ENCODE measurements at regions of chr2 and their contacts with region 1.

Region 1: DNA sequence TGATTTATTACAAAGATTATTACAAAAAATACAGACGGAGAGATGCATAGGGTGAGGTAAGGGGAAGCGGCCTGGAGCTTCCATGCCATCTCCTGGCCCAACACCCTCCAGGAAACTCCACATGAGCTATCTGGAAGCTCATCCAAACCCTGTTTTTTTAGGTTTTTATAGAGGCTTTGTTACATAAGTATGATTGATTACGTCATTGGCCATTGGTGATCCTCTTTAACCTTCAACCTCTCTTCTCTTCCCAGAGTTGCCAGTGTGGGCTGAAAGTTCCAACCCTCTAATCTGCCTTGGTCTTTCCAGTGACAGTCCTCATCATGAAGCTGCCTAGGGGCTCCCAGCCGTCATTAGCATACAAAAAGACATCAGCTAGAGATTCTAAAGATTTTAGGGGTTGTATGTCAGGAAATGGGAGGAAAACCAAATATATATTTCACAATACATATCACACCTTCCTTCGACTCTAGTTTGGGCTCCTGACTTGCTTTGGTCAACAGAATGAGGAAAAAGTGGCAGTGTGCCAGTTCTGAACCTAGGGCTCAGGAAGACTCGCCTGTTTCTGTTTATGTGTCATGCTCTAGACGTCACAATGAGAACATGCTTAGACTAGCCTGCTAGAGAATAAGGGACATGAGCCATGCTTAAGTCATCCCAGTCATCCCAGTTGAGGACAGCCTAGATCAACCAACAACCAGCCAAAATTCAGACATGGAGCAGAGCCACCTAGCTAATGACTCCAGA is 54.1 kb downstream of the ETAA1 start:
- DNase-seq: no peak
- ATAC-seq: no peak
- H3K4me3 ChIP-seq: no peak overlapping the region
- H3K27ac ChIP-seq: no peak overlapping the region
- H3K4me1 ChIP-seq: peaks cover 0 to 15% (median 0%) of the 10 kb centered on the region in 12 donors
- H3K27me3 ChIP-seq: no peaks in the 10 kb centered on the region
- CTCF ChIP-seq: no peak
- POLR2A ChIP-seq: no peak

Region 2: GRCh38 chr2:67561457-67561965 is 110.3 kb after region 1 on chr2:
- intact Hi-C with region 1: loop called in 1 of 10 experiments (anchors 2 kb)
- DNase-seq: peak; percentile 45 to 88 (median 76)
- ATAC-seq: peak; percentile 78 to 95 (median 87)
- H3K4me3 ChIP-seq: no peak overlapping the region
- H3K27ac ChIP-seq: peak overlapping the region; percentile 43 to 91 (median 70)
- H3K4me1 ChIP-seq: peaks cover 0 to 19% (median 7%) of the 10 kb centered on the region in 12 donors
- H3K27me3 ChIP-seq: no peaks in the 10 kb centered on the region
- CTCF ChIP-seq: no peak
- POLR2A ChIP-seq: no peak

Region 3: DNA sequence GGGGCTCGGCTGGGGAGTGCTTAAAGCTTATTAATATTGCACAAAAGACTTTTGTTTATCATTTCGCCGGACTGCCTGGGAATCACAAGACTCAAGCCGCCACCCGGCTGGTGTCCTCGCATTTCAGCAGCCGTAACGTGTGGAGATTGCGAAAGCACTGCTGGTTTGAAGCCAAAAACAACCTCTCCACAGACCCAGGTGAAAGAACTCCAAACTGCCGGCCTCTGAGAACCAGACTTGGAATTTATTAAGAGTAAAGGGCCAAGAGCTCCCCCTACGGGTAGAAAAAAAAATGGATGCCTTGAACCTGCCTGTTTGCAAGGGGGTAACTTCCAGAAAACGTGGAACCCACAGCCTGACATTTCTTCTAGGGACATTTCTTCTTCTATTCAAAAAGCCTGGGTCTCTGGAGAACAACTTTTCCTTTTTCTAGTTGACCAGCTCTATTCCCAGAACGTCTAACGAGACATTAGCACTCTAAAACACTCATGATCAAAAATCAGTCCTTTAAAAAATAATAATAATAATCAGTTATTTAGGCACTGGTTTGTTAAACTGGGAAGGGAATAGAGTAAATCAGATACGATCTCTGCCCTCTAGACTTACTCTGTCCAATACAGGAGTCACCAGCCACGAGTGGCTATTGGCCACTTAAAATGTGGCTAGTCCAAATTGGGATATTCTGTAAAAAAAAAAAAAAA is 395.3 kb after region 1 on chr2:
- intact Hi-C with region 1: loop called in 1 of 10 experiments (anchors 1 kb)
- DNase-seq: peak; percentile 62 to 81 (median 71)
- ATAC-seq: peak; percentile 52 to 94 (median 84)
- H3K4me3 ChIP-seq: peak overlapping the region in 5 of 12 donors; percentile 11 to 38 (median 23)
- H3K27ac ChIP-seq: peak overlapping the region in 2 of 12 donors; percentile 27 to 52
- H3K4me1 ChIP-seq: peaks cover 0 to 16% (median 0%) of the 10 kb centered on the region in 12 donors
- H3K27me3 ChIP-seq: no peaks in the 10 kb centered on the region
- CTCF ChIP-seq: peak; percentile 66 to 85 (median 77)
- POLR2A ChIP-seq: no peak

Region 4: DNA sequence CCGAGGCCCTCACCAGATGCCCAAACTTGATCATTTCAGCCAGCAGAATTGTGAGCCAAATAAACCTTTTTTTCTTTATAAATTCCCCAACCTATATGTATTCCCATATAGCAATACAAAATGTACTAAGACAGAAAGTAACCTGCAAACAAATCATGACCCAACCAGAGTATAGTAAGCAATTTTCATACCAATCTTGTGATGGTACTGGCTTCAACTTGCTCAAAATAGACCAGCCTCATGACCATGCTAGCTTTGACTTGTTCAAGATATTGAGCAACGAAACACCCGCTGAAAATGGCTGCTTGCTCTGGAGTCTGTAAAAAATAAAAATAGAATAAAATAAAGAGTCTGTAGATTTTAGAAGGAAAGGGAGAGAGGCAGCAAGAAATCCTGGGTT is 514.0 kb after region 1 on chr2:
- intact Hi-C with region 1: no loop called
- DNase-seq: no peak
- ATAC-seq: peak in 1 of 4 donors; percentile 41
- H3K4me3 ChIP-seq: no peak overlapping the region
- H3K27ac ChIP-seq: no peak overlapping the region
- H3K4me1 ChIP-seq: no peaks in the 10 kb centered on the region
- H3K27me3 ChIP-seq: no peaks in the 10 kb centered on the region
- CTCF ChIP-seq: no peak
- POLR2A ChIP-seq: no peak